OCI-LY7 (cell line): ENCODE measurements at regions of chr1 and their contacts with region 1.

Region 1: GRCh38 chr1:88877382-88877825 is 14.0 kb downstream of the GTF2B start:
- DNase-seq: peak; percentile 58
- H3K4me3 ChIP-seq: no peak overlapping the region
- H3K27ac ChIP-seq: no peak overlapping the region
- H3K4me1 ChIP-seq: no peaks in the 10 kb centered on the region
- CTCF ChIP-seq: peak; percentile 88

Region 2: DNA sequence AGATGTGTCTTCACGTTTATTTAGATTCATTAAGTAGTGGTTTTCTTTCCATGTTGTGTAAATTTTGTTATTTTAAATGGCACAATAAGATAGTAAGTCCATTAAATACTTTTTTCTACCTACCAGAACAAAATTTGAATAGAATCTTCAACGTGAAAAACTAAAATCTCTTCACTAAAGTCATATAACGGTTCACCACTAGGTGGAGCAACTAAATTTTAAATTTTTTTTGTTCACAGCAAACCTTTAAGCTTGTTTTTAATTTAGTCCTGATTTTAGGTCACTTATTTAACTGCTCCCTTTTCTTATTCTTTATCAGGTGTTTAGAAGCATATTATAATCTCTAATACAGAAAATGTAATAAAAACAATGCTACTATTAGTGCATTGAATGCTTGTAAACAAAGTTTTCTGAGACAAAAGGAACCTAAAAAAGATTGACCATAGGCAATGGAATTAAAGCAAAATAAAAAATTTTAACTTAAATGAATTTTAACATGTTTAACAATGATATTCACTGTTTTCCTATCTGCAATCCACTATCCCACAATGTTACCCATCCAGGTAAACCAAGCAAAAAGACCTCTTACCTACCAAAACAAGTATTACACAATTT is 221.6 kb before region 1 on chr1:
- CTCF ChIA-PET with region 1: no interaction called
- POLR2A ChIA-PET with region 1: interaction called, 4 read pairs
- intact Hi-C with region 1: loop called (anchors 1 kb)
- DNase-seq: peak; percentile 49
- H3K4me3 ChIP-seq: no peak overlapping the region
- H3K27ac ChIP-seq: no peak overlapping the region
- H3K4me1 ChIP-seq: no peaks in the 10 kb centered on the region
- CTCF ChIP-seq: peak; percentile 92

Region 3: GRCh38 chr1:88746916-88747315 is 130.5 kb before region 1 on chr1:
- CTCF ChIA-PET with region 1: no interaction called
- POLR2A ChIA-PET with region 1: no interaction called
- intact Hi-C with region 1: no loop called
- DNase-seq: no peak
- H3K4me3 ChIP-seq: no peak overlapping the region
- H3K27ac ChIP-seq: no peak overlapping the region
- H3K4me1 ChIP-seq: no peaks in the 10 kb centered on the region
- CTCF ChIP-seq: no peak

Region 4: GRCh38 chr1:88891318-88891950 is 14.0 kb after region 1 on chr1 and contains the start of gene GTF2B:
- CTCF ChIA-PET with region 1: no interaction called
- POLR2A ChIA-PET with region 1: interaction called, 10 read pairs
- intact Hi-C with region 1: no loop called
- DNase-seq: peak; percentile 96
- H3K4me3 ChIP-seq: peak within 1 kb of the TSS; percentile 96
- H3K27ac ChIP-seq: peak within 1 kb of the TSS; percentile 63
- H3K4me1 ChIP-seq: peaks cover 26% of the 10 kb centered on the region
- CTCF ChIP-seq: no peak
- total RNA-seq, gene GTF2B: 40.3 and 41.1 TPM in 2 replicates